Activated naive CD4-positive, alpha-beta T cell treated with anti-CD3 and anti-CD28 coated beads, Interleukin-2, amount 10 ng/mL, durations not matched to agents 7 days and 5 days (primary cell): ENCODE measurements at regions of chr4 and their contacts with region 1.

Region 1: DNA sequence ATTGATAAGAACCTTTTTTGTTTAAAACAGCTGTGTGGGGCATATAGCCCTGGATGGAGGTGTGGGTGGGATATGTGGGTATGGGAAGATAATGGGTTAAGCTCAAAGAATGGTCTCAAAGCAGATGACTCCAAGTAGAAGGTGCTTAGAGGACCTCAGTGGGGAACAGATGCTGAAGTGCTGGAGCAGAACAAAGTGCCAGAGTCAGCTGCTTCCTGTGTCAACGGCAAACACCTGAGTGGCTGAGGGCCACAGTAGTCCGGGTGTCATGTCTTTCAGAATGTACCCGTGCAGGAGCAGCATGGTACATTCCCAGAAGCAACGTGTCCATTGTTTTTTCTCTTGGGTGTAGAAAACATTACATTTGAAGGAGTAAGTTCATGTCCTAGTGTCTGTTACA is 210.6 kb downstream of the CCNG2 start:
- DNase-seq: no peak
- H3K4me3 Mint-ChIP-seq: no peak overlapping the region
- H3K27ac Mint-ChIP-seq: no peak overlapping the region
- H3K4me1 Mint-ChIP-seq: no peaks in the 10 kb centered on the region
- H3K27me3 Mint-ChIP-seq: peaks cover 10% of the 10 kb centered on the region

Region 2: GRCh38 chr4:77418333-77419038 is 50.8 kb after region 1 on chr4:
- CTCF ChIA-PET with region 1: interaction called, 18 read pairs
- DNase-seq: peak; percentile 23
- H3K4me3 Mint-ChIP-seq: no peak overlapping the region
- H3K27ac Mint-ChIP-seq: no peak overlapping the region
- H3K4me1 Mint-ChIP-seq: no peaks in the 10 kb centered on the region
- H3K27me3 Mint-ChIP-seq: peaks cover 7% of the 10 kb centered on the region

Region 3: GRCh38 chr4:77433418-77433733 is 65.7 kb after region 1 on chr4:
- CTCF ChIA-PET with region 1: interaction called, 36 read pairs
- DNase-seq: peak; percentile 29
- H3K4me3 Mint-ChIP-seq: no peak overlapping the region
- H3K27ac Mint-ChIP-seq: no peak overlapping the region
- H3K4me1 Mint-ChIP-seq: peaks cover 3% of the 10 kb centered on the region
- H3K27me3 Mint-ChIP-seq: no peaks in the 10 kb centered on the region

Region 4: GRCh38 chr4:77465271-77465670 is 97.6 kb after region 1 on chr4:
- CTCF ChIA-PET with region 1: interaction called, 11 read pairs
- DNase-seq: no peak
- H3K4me3 Mint-ChIP-seq: no peak overlapping the region
- H3K27ac Mint-ChIP-seq: no peak overlapping the region
- H3K4me1 Mint-ChIP-seq: no peaks in the 10 kb centered on the region
- H3K27me3 Mint-ChIP-seq: no peaks in the 10 kb centered on the region

Region 5: GRCh38 chr4:77613267-77613666 is 245.6 kb after region 1 on chr4:
- CTCF ChIA-PET with region 1: interaction called, 10 read pairs
- DNase-seq: no peak
- H3K4me3 Mint-ChIP-seq: no peak overlapping the region
- H3K27ac Mint-ChIP-seq: no peak overlapping the region
- H3K4me1 Mint-ChIP-seq: no peaks in the 10 kb centered on the region
- H3K27me3 Mint-ChIP-seq: peaks cover 12% of the 10 kb centered on the region